GM12878 (cell line): ENCODE measurements at regions of chr1 and their contacts with region 1.

Region 1: DNA sequence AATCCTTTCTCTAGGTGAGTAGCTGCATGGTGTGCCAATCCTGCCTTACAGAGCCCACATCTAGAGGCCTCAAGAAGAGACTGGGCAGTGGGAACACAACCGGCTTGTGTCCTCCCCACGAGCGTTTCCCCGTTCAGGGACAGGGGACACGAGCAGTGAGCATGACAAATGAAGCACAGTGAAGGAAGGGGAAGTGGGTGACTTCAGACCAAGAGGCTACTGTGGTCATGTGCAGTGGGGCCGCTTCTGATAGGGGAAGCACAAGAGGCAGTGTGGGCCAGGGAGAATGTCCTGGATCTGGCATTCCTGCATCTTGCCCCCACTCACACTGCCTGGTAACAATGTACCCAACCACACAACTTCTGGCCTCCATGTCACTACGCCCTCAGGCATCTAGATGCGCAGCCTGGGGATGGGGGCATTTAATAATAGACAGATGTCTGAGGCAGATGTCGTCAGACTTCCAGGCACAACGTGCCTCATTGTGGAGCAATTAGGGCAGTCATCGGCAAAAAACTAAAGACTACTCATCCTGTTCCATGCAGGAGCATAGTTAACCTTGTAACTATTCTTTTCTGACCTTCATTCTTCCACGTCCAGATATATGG is 155.6 kb upstream of the NBPF11 start:
- DNase-seq: no peak
- ATAC-seq: no peak
- H3K4me3 ChIP-seq: no peak overlapping the region
- H3K27ac ChIP-seq: no peak overlapping the region
- H3K4me1 ChIP-seq: no peaks in the 10 kb centered on the region
- H3K27me3 ChIP-seq: no peaks in the 10 kb centered on the region; a peak in 1 of 4 replicates
- CTCF ChIP-seq: no peak
- EP300 ChIP-seq: no peak
- POLR2A ChIP-seq: no peak
- RAD21 ChIP-seq: no peak

Region 2: DNA sequence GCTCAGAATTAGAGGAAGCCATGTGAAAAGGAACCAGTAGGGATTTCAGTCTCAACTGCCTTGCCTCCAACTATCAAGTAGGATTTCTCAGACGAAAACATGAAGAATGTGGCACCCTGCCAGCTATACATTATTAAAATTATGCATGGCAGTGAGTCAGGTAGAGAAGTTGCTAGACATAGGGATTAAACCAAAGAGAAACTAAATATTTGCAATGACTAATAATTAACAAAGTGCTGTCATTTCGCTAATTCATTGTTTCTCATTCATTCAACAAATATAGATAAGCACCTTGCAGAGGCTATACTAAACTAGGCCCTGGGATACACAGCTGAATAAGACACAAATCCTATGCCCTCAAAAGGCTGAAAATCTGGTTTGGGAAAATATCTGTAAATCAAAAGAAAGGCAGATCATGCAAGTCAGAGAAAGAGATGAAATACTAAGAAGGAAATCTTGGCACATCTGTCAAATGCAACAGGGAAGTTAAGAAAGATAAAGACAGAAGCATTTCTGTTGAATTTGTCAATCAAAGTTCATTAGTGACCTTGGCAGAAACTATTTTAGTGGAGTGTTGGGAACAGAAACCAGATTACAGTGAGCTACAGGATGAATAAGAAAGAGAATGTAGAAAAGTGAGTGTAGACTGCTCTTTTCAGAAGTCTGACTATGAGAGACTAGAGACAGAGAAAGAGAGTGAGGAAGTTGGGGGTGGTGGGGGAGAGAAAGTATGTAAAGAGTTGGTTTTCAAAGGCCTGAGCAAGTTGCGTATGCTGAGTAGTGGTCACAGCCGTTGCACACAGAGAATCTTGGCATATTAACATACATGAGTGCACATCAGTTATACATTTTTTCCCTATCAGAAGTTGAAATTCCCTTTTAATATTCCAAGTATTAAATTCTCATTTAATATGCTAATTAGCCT is 140.9 kb before region 1 on chr1:
- CTCF ChIA-PET with region 1: no interaction called
- POLR2A ChIA-PET with region 1: no interaction called
- RAD21 ChIA-PET with region 1: no interaction called
- SMC1A ChIA-PET with region 1: no interaction called
- in situ Hi-C with region 1: loop called (anchors 10 kb)
- intact Hi-C with region 1: no loop called
- DNase-seq: no peak
- ATAC-seq: peak; percentile 34; the same call in 2 of the 3 replicates
- H3K4me3 ChIP-seq: no peak overlapping the region
- H3K27ac ChIP-seq: no peak overlapping the region
- H3K4me1 ChIP-seq: no peaks in the 10 kb centered on the region
- H3K27me3 ChIP-seq: no peaks in the 10 kb centered on the region
- CTCF ChIP-seq: no peak
- EP300 ChIP-seq: no peak
- POLR2A ChIP-seq: no peak
- RAD21 ChIP-seq: no peak